Activated CD8-positive, alpha-beta T cell treated with anti-CD3 and anti-CD28 coated beads for 36 hours (primary cell): ENCODE measurements at regions of chr15 and their contacts with region 1.

Region 1: DNA sequence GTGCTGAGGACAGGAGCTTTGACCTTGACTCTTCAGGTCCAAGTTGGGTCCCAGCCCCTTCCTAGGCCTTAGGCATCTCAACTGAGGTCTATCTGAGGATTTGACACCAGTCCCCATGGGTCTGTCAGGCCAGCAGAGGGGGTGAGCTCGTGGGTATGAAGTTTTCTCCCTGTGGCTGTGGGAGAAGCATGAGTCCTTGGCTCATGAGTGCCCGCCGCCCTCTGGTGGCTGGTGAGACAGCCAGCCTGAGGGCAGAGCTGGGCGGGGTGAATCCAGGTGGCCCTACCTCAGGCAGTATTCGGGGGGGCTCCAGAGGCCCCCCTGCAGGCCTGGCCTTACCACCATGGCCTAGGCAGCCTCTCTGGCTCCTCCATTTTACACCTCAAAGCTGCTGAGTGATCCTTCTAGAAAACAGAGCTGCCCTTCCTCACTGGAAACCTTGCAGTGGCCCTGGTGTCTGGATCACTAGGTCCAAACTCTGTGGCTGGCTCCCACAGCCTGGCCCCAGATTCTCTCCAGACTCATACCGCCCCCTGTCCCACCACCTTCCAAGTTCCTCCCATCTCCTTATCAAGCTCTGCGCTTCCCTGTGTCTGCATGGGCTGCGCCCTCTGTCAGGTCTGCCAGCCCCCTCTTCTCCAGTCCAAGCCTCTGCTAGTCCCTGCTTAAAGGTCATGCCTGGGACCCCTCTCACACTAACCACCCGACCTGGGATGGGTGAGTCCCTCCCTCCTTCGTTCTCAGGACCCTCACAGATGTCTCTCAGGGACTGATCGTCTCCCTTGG is 16.1 kb downstream of the SH2D7 start:
- DNase-seq: peak; percentile 90
- ATAC-seq: peak; percentile 69
- H3K4me3 Mint-ChIP-seq: no peak overlapping the region
- H3K27ac Mint-ChIP-seq: no peak overlapping the region
- H3K4me1 Mint-ChIP-seq: peaks cover 42% of the 10 kb centered on the region
- H3K27me3 Mint-ChIP-seq: no peaks in the 10 kb centered on the region
- CTCF ChIP-seq: peak; percentile 90

Region 2: DNA sequence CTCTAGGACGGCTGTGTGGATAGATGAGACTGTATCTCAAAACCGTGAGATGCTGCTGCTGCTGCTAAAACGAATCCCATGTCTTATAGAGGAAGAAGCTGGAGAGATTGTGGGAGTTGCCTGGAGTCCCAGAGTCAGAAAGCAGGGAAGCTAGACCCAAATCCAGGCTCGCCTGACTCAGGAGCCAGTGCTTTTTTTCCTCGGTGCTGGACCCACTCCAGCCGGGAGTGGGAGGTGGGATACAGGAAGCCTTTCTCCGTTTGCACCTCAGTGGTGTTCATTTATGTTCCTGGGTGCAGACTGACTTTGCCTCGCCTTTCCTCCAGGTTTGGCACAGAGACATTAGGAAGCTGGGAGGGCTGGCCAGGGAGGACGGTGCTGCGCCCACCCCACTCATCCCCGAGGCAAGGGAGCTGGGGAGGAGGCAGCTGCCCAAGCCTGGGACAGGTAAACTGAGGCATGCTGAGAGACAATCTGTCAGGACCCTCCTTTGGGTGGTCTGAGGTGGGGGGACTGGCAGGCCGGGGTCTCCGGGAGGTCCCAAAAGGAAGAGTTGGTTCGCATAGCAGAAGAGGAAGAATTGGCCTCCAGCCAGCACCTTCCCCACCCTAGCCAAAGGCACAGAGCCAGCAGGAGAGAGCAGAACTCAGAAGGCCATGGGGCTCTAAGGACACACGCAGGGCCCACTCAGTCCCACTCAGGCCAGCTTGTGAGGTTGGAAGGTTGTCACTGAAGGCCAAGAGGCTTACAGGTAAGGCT is 324.7 kb before region 1 on chr15:
- CTCF ChIA-PET with region 1: no interaction called
- POLR2A ChIA-PET with region 1: no interaction called
- intact Hi-C with region 1: no loop called
- DNase-seq: no peak
- ATAC-seq: no peak
- H3K4me3 Mint-ChIP-seq: no peak overlapping the region
- H3K27ac Mint-ChIP-seq: no peak overlapping the region
- H3K4me1 Mint-ChIP-seq: no peaks in the 10 kb centered on the region
- H3K27me3 Mint-ChIP-seq: peaks cover 1% of the 10 kb centered on the region
- CTCF ChIP-seq: no peak

Region 3: DNA sequence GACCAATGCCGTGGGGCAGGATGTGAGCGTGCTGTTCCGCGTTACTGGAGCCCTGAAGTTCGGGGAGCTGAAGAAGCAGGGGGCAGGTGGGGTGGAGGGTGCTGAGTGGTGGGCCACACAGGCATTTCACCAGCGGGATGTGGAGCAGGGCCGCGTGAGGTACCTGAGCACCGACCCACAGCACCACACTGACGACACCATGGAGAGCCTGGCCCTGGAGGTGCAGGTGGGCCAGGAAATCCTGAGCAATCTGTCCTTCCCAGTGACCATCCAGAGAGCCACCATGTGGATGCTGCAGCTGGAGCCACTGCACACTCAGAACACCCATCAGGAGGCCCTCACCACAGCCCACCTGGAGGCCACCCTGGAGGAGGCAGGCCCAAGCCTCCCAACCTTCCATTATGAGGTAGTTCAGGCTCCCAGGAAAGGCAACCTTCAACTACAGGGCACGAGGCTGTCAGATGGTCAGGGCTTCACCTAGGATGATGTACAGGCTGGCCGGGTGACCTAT is 210.5 kb before region 1 on chr15:
- CTCF ChIA-PET with region 1: no interaction called
- POLR2A ChIA-PET with region 1: no interaction called
- intact Hi-C with region 1: no loop called
- DNase-seq: no peak
- ATAC-seq: no peak
- H3K4me3 Mint-ChIP-seq: no peak overlapping the region
- H3K27ac Mint-ChIP-seq: no peak overlapping the region
- H3K4me1 Mint-ChIP-seq: no peaks in the 10 kb centered on the region
- H3K27me3 Mint-ChIP-seq: no peaks in the 10 kb centered on the region
- CTCF ChIP-seq: no peak

Region 4: GRCh38 chr15:77959432-77959879 is 149.0 kb before region 1 on chr15:
- CTCF ChIA-PET with region 1: interaction called, 159 read pairs
- POLR2A ChIA-PET with region 1: no interaction called
- intact Hi-C with region 1: loop called (anchors 2 kb)
- DNase-seq: peak; percentile 84
- ATAC-seq: peak; percentile 100
- H3K4me3 Mint-ChIP-seq: peak overlapping the region; percentile 54
- H3K27ac Mint-ChIP-seq: no peak overlapping the region
- H3K4me1 Mint-ChIP-seq: peaks cover 2% of the 10 kb centered on the region
- H3K27me3 Mint-ChIP-seq: peaks cover 7% of the 10 kb centered on the region
- CTCF ChIP-seq: peak; percentile 98

Region 5: DNA sequence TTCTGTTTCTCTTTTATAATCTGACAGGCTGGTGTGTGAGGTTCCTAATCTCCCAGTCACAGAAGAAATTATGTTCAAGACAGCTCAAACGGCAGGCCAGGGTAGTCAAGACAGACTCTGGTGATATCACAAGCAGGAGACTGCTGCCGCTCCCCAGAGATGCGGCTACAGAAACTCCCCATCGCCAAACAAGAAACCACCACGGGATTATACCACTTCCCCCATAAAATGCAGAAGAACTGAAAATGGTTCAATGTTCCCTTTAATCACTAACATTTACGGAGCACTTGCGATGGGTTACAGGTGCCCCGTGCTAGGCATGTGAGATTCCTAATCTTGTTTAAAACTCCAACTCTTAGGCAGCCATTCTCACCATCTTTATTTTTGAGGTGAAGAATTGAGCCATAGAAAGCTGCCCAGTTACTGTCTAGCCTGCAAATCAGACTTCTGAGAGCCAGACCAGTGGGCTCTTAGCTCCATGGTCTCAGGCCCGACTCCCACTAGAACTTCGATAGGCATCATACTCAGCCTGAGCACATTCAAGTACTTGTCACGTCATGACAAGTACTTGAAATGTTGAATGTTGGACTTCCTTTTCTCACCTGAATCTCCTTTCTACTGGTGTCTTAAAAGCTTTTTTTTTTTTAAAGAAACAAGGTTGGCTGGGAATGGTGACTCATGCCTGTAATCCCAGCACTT is 89.4 kb before region 1 on chr15:
- CTCF ChIA-PET with region 1: interaction called, 12 read pairs
- POLR2A ChIA-PET with region 1: no interaction called
- intact Hi-C with region 1: no loop called
- DNase-seq: peak; percentile 30
- ATAC-seq: peak; percentile 69
- H3K4me3 Mint-ChIP-seq: no peak overlapping the region
- H3K27ac Mint-ChIP-seq: peak overlapping the region; percentile 25
- H3K4me1 Mint-ChIP-seq: peaks cover 14% of the 10 kb centered on the region
- H3K27me3 Mint-ChIP-seq: no peaks in the 10 kb centered on the region
- CTCF ChIP-seq: no peak

Region 6: DNA sequence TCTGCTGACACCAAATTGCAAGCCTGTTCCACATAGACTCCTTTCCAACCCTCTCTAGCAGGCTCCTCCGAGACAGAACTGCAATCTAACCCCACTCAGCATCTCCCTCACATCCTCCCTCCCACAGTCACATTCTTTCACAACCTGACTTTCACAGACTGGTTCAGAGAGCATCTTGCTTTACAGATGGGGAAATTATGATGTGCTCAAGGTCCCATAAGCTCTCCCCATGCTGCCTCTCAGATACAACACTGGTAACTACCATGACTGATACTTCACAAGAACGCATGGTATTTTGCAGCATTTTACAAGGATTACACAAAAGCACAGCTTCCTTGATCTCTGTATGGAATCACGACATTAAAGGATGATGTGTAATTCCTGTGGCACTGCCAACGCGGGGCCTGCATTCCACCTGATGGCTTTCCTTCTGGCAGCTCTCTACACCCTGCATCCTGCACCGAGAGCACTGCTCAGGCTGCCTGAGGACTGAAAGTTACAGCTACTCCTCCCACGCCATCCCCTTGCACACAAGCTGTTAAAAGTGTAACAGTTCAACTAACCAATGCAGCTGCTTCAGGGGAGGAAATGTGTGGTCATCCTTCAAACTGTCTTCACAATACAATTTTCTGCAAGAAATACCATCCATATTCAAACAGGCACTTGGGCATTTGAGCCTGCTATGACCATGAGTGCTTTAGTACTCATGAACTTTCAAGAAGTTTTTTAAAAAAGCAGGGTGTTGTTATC is 58.6 kb before region 1 on chr15:
- CTCF ChIA-PET with region 1: interaction called, 17 read pairs
- POLR2A ChIA-PET with region 1: interaction called, 3 read pairs
- intact Hi-C with region 1: no loop called
- DNase-seq: peak; percentile 94
- ATAC-seq: peak; percentile 78
- H3K4me3 Mint-ChIP-seq: peak overlapping the region; percentile 41
- H3K27ac Mint-ChIP-seq: peak overlapping the region; percentile 95
- H3K4me1 Mint-ChIP-seq: peaks cover 94% of the 10 kb centered on the region
- H3K27me3 Mint-ChIP-seq: no peaks in the 10 kb centered on the region
- CTCF ChIP-seq: no peak

Region 7: GRCh38 chr15:78077058-78077877 is 31.2 kb before region 1 on chr15 and contains the start of gene TBC1D2B:
- CTCF ChIA-PET with region 1: interaction called, 15 read pairs
- POLR2A ChIA-PET with region 1: interaction called, 10 read pairs
- intact Hi-C with region 1: no loop called
- DNase-seq: peak; percentile 71
- ATAC-seq: peak; percentile 82
- H3K4me3 Mint-ChIP-seq: peak within 1 kb of the TSS; percentile 91
- H3K27ac Mint-ChIP-seq: peak within 1 kb of the TSS; percentile 92
- H3K4me1 Mint-ChIP-seq: peaks cover 38% of the 10 kb centered on the region
- H3K27me3 Mint-ChIP-seq: no peaks in the 10 kb centered on the region
- CTCF ChIP-seq: no peak
- total RNA-seq, gene TBC1D2B: 62.9 to 65.7 TPM

Region 8: DNA sequence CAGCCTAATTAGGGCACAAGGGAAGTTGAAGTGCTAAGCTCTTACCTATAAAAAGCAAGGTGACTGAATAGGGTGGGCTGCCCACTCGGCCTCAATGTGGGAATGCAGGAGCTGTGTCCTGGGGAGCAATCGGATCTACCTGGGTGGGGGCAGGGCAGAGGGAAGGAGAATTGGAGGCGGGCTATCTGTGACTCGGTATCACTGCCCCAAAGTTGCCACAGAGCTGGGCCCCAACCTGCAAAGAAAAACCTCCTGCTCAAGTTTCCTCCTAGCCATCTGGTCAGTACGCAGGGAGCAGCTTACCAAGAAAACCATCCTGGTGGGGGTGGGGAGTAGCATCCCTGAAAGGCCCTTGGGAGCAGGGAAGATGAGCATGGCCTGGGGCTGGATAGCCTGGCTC is 12.0 kb after region 1 on chr15:
- CTCF ChIA-PET with region 1: interaction called, 13 read pairs
- POLR2A ChIA-PET with region 1: no interaction called
- intact Hi-C with region 1: no loop called
- DNase-seq: no peak
- ATAC-seq: no peak
- H3K4me3 Mint-ChIP-seq: no peak overlapping the region
- H3K27ac Mint-ChIP-seq: no peak overlapping the region
- H3K4me1 Mint-ChIP-seq: no peaks in the 10 kb centered on the region
- H3K27me3 Mint-ChIP-seq: no peaks in the 10 kb centered on the region
- CTCF ChIP-seq: no peak

Region 9: DNA sequence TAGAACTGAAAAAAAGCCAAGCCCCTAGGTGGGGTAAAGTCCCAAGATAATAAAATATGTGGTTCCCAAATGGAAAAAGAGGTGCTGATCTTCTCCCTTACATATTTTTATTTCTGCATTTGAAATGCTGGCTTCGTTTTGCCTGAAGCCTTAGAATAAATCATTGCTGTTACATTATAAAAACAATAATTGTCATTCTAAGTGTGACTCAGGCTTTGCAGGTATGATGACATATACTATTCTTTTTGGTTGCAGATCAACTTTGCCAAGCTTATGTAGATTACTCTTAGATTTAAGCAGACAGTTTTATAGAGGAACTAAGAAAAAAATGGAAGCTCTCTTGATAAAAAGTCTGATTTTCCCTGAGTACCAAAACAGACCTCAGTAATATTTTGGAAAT is 48.2 kb after region 1 on chr15:
- CTCF ChIA-PET with region 1: no interaction called
- POLR2A ChIA-PET with region 1: no interaction called
- intact Hi-C with region 1: no loop called
- DNase-seq: no peak
- ATAC-seq: no peak
- H3K4me3 Mint-ChIP-seq: no peak overlapping the region
- H3K27ac Mint-ChIP-seq: no peak overlapping the region
- H3K4me1 Mint-ChIP-seq: peaks cover 11% of the 10 kb centered on the region
- H3K27me3 Mint-ChIP-seq: no peaks in the 10 kb centered on the region
- CTCF ChIP-seq: no peak

Region 10: DNA sequence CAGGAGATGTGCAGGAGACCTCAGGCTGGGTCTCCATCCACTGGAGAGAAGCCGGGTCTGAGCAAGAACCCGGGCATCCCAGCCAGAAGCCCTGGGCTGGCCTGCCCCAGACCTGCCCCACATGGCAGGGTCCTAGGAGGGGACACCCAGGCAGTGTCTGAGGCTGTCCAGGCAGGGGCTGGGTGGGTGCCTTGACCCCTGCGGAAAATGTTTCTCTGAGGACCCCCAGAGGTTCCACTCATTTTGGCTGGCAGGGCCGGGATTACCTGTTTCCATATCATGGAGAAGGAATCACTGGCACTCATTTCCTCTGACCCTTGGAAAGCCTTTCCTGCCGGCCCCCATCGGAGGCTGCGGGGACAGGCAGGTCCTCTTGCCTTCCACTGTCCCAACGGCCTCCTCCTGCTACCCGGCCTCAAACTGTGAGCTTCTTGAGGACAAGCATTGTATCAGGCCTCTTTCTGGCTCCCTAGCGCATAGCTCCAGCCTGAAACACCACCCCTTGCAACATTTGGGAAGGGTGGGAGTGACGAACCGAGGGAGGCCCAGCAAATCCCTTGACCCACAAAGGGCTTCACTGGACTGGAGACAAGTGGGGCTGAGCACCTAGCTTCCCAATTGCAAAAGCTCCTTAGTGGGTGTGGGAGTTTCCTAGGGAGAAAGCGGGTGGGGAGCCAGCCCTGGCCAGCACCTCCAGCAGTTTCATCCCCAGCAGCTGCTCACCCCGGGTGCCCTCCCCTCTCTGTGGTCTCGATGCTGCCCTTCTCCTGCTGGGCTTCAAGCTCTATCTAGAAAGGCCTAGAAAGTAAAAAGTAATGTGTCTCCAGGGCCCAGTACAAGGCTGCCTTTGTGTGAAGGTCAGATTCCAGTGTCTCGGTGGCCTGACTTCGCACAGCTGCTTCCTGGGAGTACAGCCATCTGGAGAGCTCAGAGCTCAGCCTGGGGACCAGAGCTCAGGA is 96.1 kb after region 1 on chr15:
- CTCF ChIA-PET with region 1: interaction called, 10 read pairs
- POLR2A ChIA-PET with region 1: no interaction called
- intact Hi-C with region 1: no loop called
- DNase-seq: no peak
- ATAC-seq: no peak
- H3K4me3 Mint-ChIP-seq: no peak overlapping the region
- H3K27ac Mint-ChIP-seq: no peak overlapping the region
- H3K4me1 Mint-ChIP-seq: no peaks in the 10 kb centered on the region
- H3K27me3 Mint-ChIP-seq: no peaks in the 10 kb centered on the region
- CTCF ChIP-seq: no peak

Region 11: GRCh38 chr15:78308422-78309032 is 200.0 kb after region 1 on chr15:
- CTCF ChIA-PET with region 1: no interaction called
- POLR2A ChIA-PET with region 1: no interaction called
- intact Hi-C with region 1: no loop called
- DNase-seq: peak; percentile 80
- ATAC-seq: peak; percentile 98
- H3K4me3 Mint-ChIP-seq: no peak overlapping the region
- H3K27ac Mint-ChIP-seq: no peak overlapping the region
- H3K4me1 Mint-ChIP-seq: no peaks in the 10 kb centered on the region
- H3K27me3 Mint-ChIP-seq: peaks cover 5% of the 10 kb centered on the region
- CTCF ChIP-seq: peak; percentile 74